B cell (primary cell): ENCODE measurements at regions of chr18 and their contacts with region 1.

Region 1: GRCh38 chr18:77067291-77068061 is 65.1 kb downstream of the MBP start:
- DNase-seq: peak; percentile 48
- ATAC-seq: peak; percentile 24
- H3K4me3 ChIP-seq: peak overlapping the region in 1 of 5 experiments; percentile 49
- H3K4me3 Mint-ChIP-seq: peak overlapping the region; percentile 82
- H3K27ac ChIP-seq: peak overlapping the region; percentile 77 to 97
- H3K27ac Mint-ChIP-seq: peak overlapping the region; percentile 98
- H3K4me1 ChIP-seq: peaks cover 72 to 84% of the 10 kb centered on the region in 2 donors
- H3K4me1 Mint-ChIP-seq: peaks cover 99% of the 10 kb centered on the region
- H3K27me3 ChIP-seq: no peaks in the 10 kb centered on the region
- H3K27me3 Mint-ChIP-seq: no peaks in the 10 kb centered on the region
- CTCF ChIP-seq: no peak

Region 2: GRCh38 chr18:76963936-76964335 is 103.5 kb before region 1 on chr18:
- CTCF ChIA-PET with region 1: no interaction called
- POLR2A ChIA-PET with region 1: no interaction called
- intact Hi-C with region 1: loop called (anchors 2 kb)
- DNase-seq: peak; percentile 65
- ATAC-seq: no peak
- H3K4me3 ChIP-seq: peak overlapping the region in 2 of 5 experiments; percentile 18 to 44
- H3K4me3 Mint-ChIP-seq: peak overlapping the region; percentile 71
- H3K27ac ChIP-seq: peak overlapping the region; percentile 26 to 93
- H3K27ac Mint-ChIP-seq: peak overlapping the region; percentile 94
- H3K4me1 ChIP-seq: peaks cover 63 to 67% of the 10 kb centered on the region in 2 donors
- H3K4me1 Mint-ChIP-seq: peaks cover 35% of the 10 kb centered on the region
- H3K27me3 ChIP-seq: no peaks in the 10 kb centered on the region
- H3K27me3 Mint-ChIP-seq: no peaks in the 10 kb centered on the region
- CTCF ChIP-seq: no peak

Region 3: GRCh38 chr18:77023102-77023782 is 44.2 kb before region 1 on chr18:
- CTCF ChIA-PET with region 1: no interaction called
- POLR2A ChIA-PET with region 1: no interaction called
- intact Hi-C with region 1: no loop called
- DNase-seq: no peak
- ATAC-seq: no peak
- H3K4me3 ChIP-seq: no peak overlapping the region
- H3K4me3 Mint-ChIP-seq: no peak overlapping the region
- H3K27ac ChIP-seq: no peak overlapping the region
- H3K27ac Mint-ChIP-seq: no peak overlapping the region
- H3K4me1 ChIP-seq: peaks cover 0 to 10% of the 10 kb centered on the region in 2 donors
- H3K4me1 Mint-ChIP-seq: peaks cover 2% of the 10 kb centered on the region
- H3K27me3 ChIP-seq: no peaks in the 10 kb centered on the region
- H3K27me3 Mint-ChIP-seq: no peaks in the 10 kb centered on the region
- CTCF ChIP-seq: no peak

Region 4: DNA sequence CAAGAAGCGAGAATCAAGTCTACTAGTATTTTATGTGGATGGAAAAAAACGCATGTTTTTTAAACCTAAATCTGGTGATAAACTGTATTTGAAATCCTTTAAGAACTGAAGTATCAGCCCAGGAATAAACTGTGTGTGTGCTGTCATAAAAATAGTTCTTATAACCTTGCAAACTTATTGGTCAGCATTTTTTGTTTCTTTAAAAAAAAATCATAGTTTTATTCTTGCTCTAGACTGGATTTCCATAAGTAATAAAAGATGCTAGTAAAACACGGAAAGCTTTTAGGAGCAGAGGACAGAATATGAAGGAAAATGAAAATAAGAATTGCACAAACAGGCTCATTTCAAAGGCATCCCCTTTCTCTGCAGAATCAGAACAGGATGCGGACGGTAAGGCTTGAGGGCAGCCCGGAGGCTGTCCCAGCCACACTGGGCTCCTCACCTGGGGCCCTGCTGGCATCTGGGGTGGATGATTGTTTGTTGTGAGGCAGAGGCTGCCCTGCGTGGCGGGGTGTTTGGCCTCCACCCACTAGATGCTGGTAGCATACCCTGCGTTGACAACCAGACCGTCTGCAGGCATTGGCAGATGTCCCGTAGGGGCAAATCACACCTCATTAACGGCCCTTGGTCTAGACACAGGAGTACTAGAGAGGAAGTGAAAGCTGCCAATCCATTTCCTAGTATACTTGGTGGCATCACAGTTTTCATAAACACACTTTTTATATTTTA is 12.6 kb after region 1 on chr18:
- CTCF ChIA-PET with region 1: interaction called, 21 read pairs
- POLR2A ChIA-PET with region 1: interaction called, 12 read pairs
- intact Hi-C with region 1: loop called (anchors 1 kb)
- DNase-seq: peak; percentile 91
- ATAC-seq: peak; percentile 98
- H3K4me3 ChIP-seq: peak overlapping the region in 1 of 5 experiments; percentile 38
- H3K4me3 Mint-ChIP-seq: peak overlapping the region; percentile 70
- H3K27ac ChIP-seq: peak overlapping the region in 1 of 2 donors; percentile 87
- H3K27ac Mint-ChIP-seq: peak overlapping the region; percentile 94
- H3K4me1 ChIP-seq: peaks cover 18 to 27% of the 10 kb centered on the region in 2 donors
- H3K4me1 Mint-ChIP-seq: peaks cover 66% of the 10 kb centered on the region
- H3K27me3 ChIP-seq: no peaks in the 10 kb centered on the region
- H3K27me3 Mint-ChIP-seq: no peaks in the 10 kb centered on the region
- CTCF ChIP-seq: no peak

Region 5: GRCh38 chr18:77132371-77133050 is 65.0 kb after region 1 on chr18 and contains the start of gene MBP:
- CTCF ChIA-PET with region 1: interaction called, 12 read pairs
- POLR2A ChIA-PET with region 1: interaction called, 30 read pairs
- intact Hi-C with region 1: loop called (anchors 1 kb)
- DNase-seq: peak; percentile 77
- ATAC-seq: peak; percentile 52
- H3K4me3 ChIP-seq: peak within 1 kb of the TSS; percentile 34 to 90 (median 80)
- H3K4me3 Mint-ChIP-seq: peak within 1 kb of the TSS; percentile 96
- H3K27ac ChIP-seq: peak within 1 kb of the TSS; percentile 78 to 88
- H3K27ac Mint-ChIP-seq: peak within 1 kb of the TSS; percentile 93
- H3K4me1 ChIP-seq: peaks cover 45 to 54% of the 10 kb centered on the region in 2 donors
- H3K4me1 Mint-ChIP-seq: peaks cover 54% of the 10 kb centered on the region
- H3K27me3 ChIP-seq: no peaks in the 10 kb centered on the region
- H3K27me3 Mint-ChIP-seq: no peaks in the 10 kb centered on the region
- CTCF ChIP-seq: no peak
- total RNA-seq, gene MBP: 192 and 193 TPM in 2 replicates